ENCODE measurements at regions of chr3 and their contacts with region 1.

Region 1: GRCh38 chr3:171772427-171773056 is 37.7 kb downstream of the PLD1 start:
- DNase-seq: no peak
- H3K4me3 Mint-ChIP-seq: no peak overlapping the region
- H3K27ac Mint-ChIP-seq: no peak overlapping the region
- H3K4me1 Mint-ChIP-seq: no peaks in the 10 kb centered on the region
- H3K27me3 Mint-ChIP-seq: peaks cover 21% of the 10 kb centered on the region

Region 2: GRCh38 chr3:171049861-171050444 is 722.6 kb before region 1 on chr3:
- intact Hi-C with region 1: loop called (anchors 1 kb)
- DNase-seq: peak; percentile 9
- H3K4me3 Mint-ChIP-seq: no peak overlapping the region
- H3K27ac Mint-ChIP-seq: no peak overlapping the region
- H3K4me1 Mint-ChIP-seq: no peaks in the 10 kb centered on the region
- H3K27me3 Mint-ChIP-seq: peaks cover 10% of the 10 kb centered on the region

Region 3: GRCh38 chr3:171614318-171614921 is 158.1 kb before region 1 on chr3:
- intact Hi-C with region 1: loop called (anchors 1 kb)
- DNase-seq: no peak
- H3K4me3 Mint-ChIP-seq: no peak overlapping the region
- H3K27ac Mint-ChIP-seq: no peak overlapping the region
- H3K4me1 Mint-ChIP-seq: no peaks in the 10 kb centered on the region
- H3K27me3 Mint-ChIP-seq: peaks cover 19% of the 10 kb centered on the region

Region 4: GRCh38 chr3:171703756-171704401 is 68.7 kb before region 1 on chr3:
- intact Hi-C with region 1: loop called (anchors 5 kb)
- DNase-seq: no peak
- H3K4me3 Mint-ChIP-seq: no peak overlapping the region
- H3K27ac Mint-ChIP-seq: no peak overlapping the region
- H3K4me1 Mint-ChIP-seq: no peaks in the 10 kb centered on the region
- H3K27me3 Mint-ChIP-seq: peaks cover 14% of the 10 kb centered on the region

Measured in activated T-helper 1 cell treated with anti-CD3 and anti-CD28 coated beads, Interleukin-12 subunit alpha, Interleukin-12 subunit beta, Interleukin-2, Interleukin-4 antibody, amounts not matched to agents 30 ng/mL and 10 ng/mL and 1 ng/mL, durations not matched to agents 14 hours and 24 hours and 36 hours (primary cell).